ENCODE measurements at regions of chr17 and their contacts with region 1.

Region 1: DNA sequence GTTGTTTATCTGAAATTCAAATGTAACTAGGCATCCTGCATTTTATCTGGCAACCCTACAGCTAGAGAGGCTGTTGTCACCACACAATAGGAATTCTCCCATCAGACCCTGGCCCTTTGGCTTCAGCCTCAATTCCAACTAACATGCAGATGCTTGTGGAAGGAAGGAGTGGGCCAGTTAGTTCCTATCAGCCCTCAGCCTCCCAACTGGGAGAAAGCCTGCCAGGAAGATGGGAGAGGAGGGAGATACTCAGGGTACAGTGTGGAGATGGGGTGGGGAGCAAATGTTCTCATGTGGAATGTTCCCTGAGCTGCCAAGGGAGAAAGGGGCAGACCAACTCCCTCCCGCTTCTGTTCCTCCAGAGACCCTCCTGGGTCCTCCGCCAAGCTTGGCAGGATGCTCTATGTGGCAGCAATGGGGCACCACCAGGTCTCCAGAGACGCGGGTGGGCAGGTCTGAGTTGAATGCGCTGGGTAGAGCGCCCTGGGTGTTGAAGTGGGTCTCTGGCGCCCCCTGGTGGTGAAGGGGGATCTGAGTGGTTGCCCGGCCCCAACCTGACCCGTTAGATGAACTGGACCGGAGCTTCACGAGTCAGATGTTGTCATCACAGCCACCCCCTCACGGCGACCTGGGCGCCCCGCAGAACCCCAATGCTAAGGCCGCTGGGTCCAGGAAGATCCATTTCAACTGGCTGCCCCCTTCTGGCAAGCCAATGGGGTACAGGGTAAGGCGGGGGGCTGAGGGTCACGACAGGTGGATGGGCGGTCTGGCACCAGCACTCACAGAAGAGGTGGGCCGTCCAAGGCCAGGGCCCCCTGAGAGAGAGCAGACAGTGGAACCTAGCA is 15.2 kb downstream of the GALK1 start:
- DNase-seq: peak; percentile 95
- ATAC-seq: peak; percentile 77
- H3K4me3 Mint-ChIP-seq: no peak overlapping the region
- H3K27ac Mint-ChIP-seq: no peak overlapping the region
- H3K4me1 Mint-ChIP-seq: peaks cover 17% of the 10 kb centered on the region
- H3K27me3 Mint-ChIP-seq: peaks cover 1% of the 10 kb centered on the region
- CTCF ChIP-seq: peak; percentile 96

Region 2: GRCh38 chr17:75331671-75332070 is 418.1 kb before region 1 on chr17:
- CTCF ChIA-PET with region 1: no interaction called
- POLR2A ChIA-PET with region 1: no interaction called
- intact Hi-C with region 1: no loop called
- DNase-seq: no peak
- ATAC-seq: no peak
- H3K4me3 Mint-ChIP-seq: no peak overlapping the region
- H3K27ac Mint-ChIP-seq: no peak overlapping the region
- H3K4me1 Mint-ChIP-seq: peaks cover 54% of the 10 kb centered on the region
- H3K27me3 Mint-ChIP-seq: no peaks in the 10 kb centered on the region
- CTCF ChIP-seq: no peak

Region 3: GRCh38 chr17:75456417-75457046 is 293.2 kb before region 1 on chr17 and contains the start of gene TMEM94:
- CTCF ChIA-PET with region 1: interaction called, 11 read pairs
- POLR2A ChIA-PET with region 1: no interaction called
- intact Hi-C with region 1: no loop called
- DNase-seq: peak; percentile 96
- ATAC-seq: peak; percentile 97
- H3K4me3 Mint-ChIP-seq: peak within 1 kb of the TSS; percentile 89
- H3K27ac Mint-ChIP-seq: peak within 1 kb of the TSS; percentile 85
- H3K4me1 Mint-ChIP-seq: peaks cover 27% of the 10 kb centered on the region
- H3K27me3 Mint-ChIP-seq: no peaks in the 10 kb centered on the region
- CTCF ChIP-seq: no peak
- total RNA-seq, gene TMEM94: 55.3 to 56.4 TPM

Region 4: DNA sequence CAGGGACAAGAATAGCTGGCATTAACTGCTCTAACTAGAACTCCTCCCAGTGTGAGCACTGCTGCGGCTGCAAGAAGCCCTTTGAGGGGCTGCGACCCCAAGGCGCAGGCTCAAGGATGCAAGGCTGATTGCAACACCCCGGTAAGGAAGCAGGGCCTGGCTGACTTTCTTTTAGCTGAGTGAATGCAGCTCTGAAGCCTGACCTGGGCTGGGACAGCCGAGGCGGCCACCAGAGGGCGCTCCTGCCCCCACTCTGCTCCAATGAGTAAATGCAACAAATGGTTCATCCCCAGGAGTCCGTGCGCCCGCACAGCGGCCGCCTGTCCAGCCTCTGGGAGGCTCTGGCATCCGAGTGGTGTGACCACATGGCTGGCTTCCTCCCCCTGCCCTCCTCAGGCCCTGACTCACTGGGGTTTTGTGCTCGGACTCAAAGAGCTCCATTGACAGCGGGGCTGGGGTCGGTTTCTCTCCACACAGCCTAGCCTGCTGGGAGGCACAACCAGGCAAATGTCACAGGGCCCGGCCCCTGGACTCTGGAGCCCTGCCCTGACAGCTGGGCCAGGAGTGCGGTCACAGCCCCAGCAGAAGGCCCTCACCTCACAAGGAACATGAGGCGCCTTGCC is 116.8 kb before region 1 on chr17 and contains the start of gene SMIM5:
- CTCF ChIA-PET with region 1: interaction called, 280 read pairs
- POLR2A ChIA-PET with region 1: interaction called, 4 read pairs
- intact Hi-C with region 1: loop called (anchors 5 kb)
- DNase-seq: peak; percentile 88
- ATAC-seq: peak; percentile 93
- H3K4me3 Mint-ChIP-seq: no peak within 1 kb of the TSS
- H3K27ac Mint-ChIP-seq: no peak within 1 kb of the TSS
- H3K4me1 Mint-ChIP-seq: peaks cover 4% of the 10 kb centered on the region
- H3K27me3 Mint-ChIP-seq: no peaks in the 10 kb centered on the region
- CTCF ChIP-seq: peak; percentile 95
- total RNA-seq, gene SMIM5: 0.07 to 0.25 TPM

Region 5: GRCh38 chr17:75667021-75667790 is 82.6 kb before region 1 on chr17 and contains the starts of genes RECQL5 and SAP30BP:
- CTCF ChIA-PET with region 1: interaction called, 347 read pairs
- POLR2A ChIA-PET with region 1: interaction called, 6 read pairs
- intact Hi-C with region 1: no loop called
- DNase-seq: peak; percentile 99
- ATAC-seq: peak; percentile 100
- H3K4me3 Mint-ChIP-seq: no peak within 1 kb of the TSS
- H3K27ac Mint-ChIP-seq: peak within 1 kb of the TSS; percentile 63
- H3K4me1 Mint-ChIP-seq: peaks cover 37% of the 10 kb centered on the region
- H3K27me3 Mint-ChIP-seq: no peaks in the 10 kb centered on the region
- CTCF ChIP-seq: no peak
- total RNA-seq, gene RECQL5: 33.3 to 34.2 TPM
- total RNA-seq, gene SAP30BP: 73.0 to 75.8 TPM

Region 6: DNA sequence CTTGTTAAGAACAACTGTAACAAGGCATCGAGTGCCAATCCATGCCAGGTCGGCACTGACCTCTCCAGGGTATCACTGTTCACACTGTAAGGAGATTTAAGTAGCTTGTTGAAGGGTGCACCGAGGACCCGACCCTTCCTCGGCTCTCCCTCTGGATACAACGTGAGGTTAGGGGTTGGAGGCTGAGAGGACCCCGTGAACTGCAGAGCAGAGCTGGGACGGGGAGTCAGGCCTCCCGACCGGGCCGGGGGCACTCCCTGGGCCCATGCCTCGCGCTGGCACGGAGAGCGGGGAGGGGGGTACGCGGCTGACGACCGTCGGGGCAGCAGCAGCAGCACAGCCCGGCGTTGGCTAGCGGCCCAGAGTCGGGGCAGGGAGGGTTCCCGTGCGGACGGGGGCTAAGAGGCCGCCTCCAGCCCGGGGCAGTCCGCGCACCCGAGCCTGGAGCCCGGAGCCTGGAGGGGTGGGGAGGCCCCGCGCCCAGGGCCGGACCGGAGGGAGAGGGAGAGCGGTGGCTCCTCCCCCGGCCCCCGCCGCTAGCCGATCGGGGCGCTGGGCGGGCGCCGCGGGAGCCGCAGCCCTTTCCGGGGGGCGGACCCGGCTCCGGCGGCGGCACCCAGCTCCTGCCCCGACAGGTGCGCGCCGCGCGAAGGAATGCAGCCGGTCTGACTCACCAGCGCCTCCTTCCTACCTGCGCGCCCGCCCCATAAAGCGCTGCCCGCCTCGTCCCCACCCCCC is 28.9 kb before region 1 on chr17 and contains the start of gene ITGB4:
- CTCF ChIA-PET with region 1: interaction called, 217 read pairs
- POLR2A ChIA-PET with region 1: interaction called, 3 read pairs
- intact Hi-C with region 1: no loop called
- DNase-seq: peak; percentile 63
- ATAC-seq: peak; percentile 93
- H3K4me3 Mint-ChIP-seq: peak within 1 kb of the TSS; percentile 67
- H3K27ac Mint-ChIP-seq: no peak within 1 kb of the TSS
- H3K4me1 Mint-ChIP-seq: peaks cover 3% of the 10 kb centered on the region
- H3K27me3 Mint-ChIP-seq: peaks cover 9% of the 10 kb centered on the region
- CTCF ChIP-seq: peak; percentile 14
- total RNA-seq, gene ITGB4: 0.69 to 1.8 TPM

Region 7: GRCh38 chr17:75784473-75785015 is 34.8 kb after region 1 on chr17 and contains the start of gene UNK:
- CTCF ChIA-PET with region 1: interaction called, 15 read pairs
- POLR2A ChIA-PET with region 1: interaction called, 7 read pairs
- intact Hi-C with region 1: no loop called
- DNase-seq: peak; percentile 98
- ATAC-seq: peak; percentile 71
- H3K4me3 Mint-ChIP-seq: peak within 1 kb of the TSS; percentile 93
- H3K27ac Mint-ChIP-seq: peak within 1 kb of the TSS; percentile 100
- H3K4me1 Mint-ChIP-seq: peaks cover 35% of the 10 kb centered on the region
- H3K27me3 Mint-ChIP-seq: peaks cover 2% of the 10 kb centered on the region
- CTCF ChIP-seq: no peak
- total RNA-seq, gene UNK: 26.4 to 26.6 TPM

Region 8: DNA sequence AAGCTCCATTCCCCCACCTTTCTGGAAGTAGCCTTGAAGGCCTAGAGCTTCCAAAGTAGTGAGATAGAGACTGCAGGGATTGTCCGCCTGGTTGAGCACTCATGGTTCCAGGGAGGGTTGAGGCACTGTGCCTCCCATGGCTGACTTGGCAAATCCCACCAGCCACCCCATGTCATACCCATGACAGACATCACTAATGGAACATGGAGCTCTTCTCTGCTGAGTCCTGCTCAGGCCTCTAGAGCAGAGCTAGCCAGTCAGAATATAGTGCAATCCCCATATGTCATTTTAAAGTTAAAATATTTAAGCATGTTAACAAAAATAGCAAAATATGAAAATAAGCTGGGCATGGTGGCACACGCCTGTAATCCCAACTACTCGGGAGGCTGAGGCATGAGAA is 65.6 kb after region 1 on chr17:
- CTCF ChIA-PET with region 1: no interaction called
- POLR2A ChIA-PET with region 1: no interaction called
- intact Hi-C with region 1: no loop called
- DNase-seq: no peak
- ATAC-seq: no peak
- H3K4me3 Mint-ChIP-seq: no peak overlapping the region
- H3K27ac Mint-ChIP-seq: no peak overlapping the region
- H3K4me1 Mint-ChIP-seq: no peaks in the 10 kb centered on the region
- H3K27me3 Mint-ChIP-seq: no peaks in the 10 kb centered on the region
- CTCF ChIP-seq: no peak

Region 9: GRCh38 chr17:75864448-75864871 is 114.7 kb after region 1 on chr17:
- CTCF ChIA-PET with region 1: interaction called, 15 read pairs
- POLR2A ChIA-PET with region 1: no interaction called
- intact Hi-C with region 1: no loop called
- DNase-seq: peak; percentile 71
- ATAC-seq: peak; percentile 78
- H3K4me3 Mint-ChIP-seq: no peak overlapping the region
- H3K27ac Mint-ChIP-seq: peak overlapping the region; percentile 78
- H3K4me1 Mint-ChIP-seq: peaks cover 17% of the 10 kb centered on the region
- H3K27me3 Mint-ChIP-seq: no peaks in the 10 kb centered on the region
- CTCF ChIP-seq: no peak

Measured in activated CD8-positive, alpha-beta T cell treated with anti-CD3 and anti-CD28 coated beads for 36 hours (primary cell).